ENCODE measurements at regions of chr10 and their contacts with region 1.

Region 1: DNA sequence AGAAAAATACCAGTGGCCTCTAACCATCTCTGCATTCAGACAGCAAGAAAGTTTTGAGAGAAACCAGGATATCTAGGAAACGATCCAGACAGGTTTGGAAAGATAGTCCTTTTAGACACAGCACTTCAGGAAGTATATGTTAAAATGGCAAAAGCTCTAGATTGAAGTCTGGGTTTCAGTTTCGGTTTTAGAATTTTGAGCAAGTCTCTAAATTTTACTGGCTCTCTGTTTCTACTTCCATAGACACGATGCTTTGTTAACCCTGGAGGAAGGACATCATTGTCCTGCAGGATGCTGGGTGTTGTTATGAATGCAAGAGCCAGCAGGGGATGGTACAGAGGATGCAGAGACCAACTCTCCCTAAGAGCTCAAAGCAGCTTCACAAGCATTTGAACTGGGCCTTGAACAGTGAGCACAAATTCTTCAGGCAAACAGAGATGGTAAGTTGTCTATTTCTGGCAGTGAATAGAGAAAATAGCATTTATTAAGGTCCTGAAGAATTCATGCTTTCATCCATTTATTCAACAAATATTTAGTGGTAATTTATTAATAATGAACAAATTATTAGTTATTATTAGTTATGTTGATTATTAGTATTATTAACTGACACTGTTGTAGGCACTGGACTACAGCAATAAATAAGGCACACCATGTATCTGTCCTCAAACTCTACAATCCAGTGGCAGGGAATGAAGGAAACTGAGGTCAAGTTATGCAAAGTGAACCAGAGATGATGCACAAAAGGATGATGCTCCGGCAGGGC is 152.7 kb upstream of the NRP1 start:
- DNase-seq: no peak
- ATAC-seq: peak in 1 of 8 donors; percentile 49
- H3K4me3 ChIP-seq: no peak overlapping the region
- H3K27ac ChIP-seq: no peak overlapping the region
- H3K4me1 ChIP-seq: peaks cover 0 to 50% (median 7%) of the 10 kb centered on the region in 9 donors
- H3K27me3 ChIP-seq: no peaks in the 10 kb centered on the region
- CTCF ChIP-seq: peak in 1 of 9 donors; percentile 21

Region 2: DNA sequence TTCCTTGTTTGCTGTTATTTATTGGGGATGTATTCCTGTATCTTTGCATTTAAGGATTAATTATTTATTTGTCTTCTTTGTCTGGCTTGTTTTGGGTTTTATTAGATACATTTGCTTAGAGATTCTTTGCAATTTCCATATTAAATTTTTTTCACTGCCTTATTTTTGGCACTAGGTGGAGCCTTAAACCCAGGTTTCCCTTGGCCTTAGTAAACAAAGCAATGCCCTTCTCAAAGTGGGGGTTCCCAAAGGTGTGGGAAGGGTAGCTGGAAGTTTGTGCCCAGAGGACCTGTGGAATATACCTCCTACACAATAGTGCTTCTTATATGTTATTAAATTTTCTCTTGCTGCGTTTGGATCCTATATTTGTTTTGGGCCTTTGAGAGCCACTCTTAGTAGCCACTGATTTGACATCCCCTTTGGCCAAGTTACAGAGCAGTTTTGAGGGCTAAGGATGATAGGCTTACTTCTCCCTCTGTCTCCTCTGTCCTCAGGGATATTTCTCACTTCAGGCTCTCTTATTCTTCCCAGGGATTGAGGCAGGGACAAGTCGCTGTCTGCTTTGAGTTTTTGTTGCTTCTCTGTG is 691.5 kb before region 1 on chr10:
- intact Hi-C with region 1: no loop called
- DNase-seq: peak in 1 of 2 donors; percentile 13
- ATAC-seq: peak in 2 of 8 donors; percentile 58 to 67
- H3K4me3 ChIP-seq: no peak overlapping the region
- H3K27ac ChIP-seq: no peak overlapping the region
- H3K4me1 ChIP-seq: no peaks in the 10 kb centered on the region
- H3K27me3 ChIP-seq: no peaks in the 10 kb centered on the region
- CTCF ChIP-seq: peak; percentile 51 to 87 (median 74)

Region 3: DNA sequence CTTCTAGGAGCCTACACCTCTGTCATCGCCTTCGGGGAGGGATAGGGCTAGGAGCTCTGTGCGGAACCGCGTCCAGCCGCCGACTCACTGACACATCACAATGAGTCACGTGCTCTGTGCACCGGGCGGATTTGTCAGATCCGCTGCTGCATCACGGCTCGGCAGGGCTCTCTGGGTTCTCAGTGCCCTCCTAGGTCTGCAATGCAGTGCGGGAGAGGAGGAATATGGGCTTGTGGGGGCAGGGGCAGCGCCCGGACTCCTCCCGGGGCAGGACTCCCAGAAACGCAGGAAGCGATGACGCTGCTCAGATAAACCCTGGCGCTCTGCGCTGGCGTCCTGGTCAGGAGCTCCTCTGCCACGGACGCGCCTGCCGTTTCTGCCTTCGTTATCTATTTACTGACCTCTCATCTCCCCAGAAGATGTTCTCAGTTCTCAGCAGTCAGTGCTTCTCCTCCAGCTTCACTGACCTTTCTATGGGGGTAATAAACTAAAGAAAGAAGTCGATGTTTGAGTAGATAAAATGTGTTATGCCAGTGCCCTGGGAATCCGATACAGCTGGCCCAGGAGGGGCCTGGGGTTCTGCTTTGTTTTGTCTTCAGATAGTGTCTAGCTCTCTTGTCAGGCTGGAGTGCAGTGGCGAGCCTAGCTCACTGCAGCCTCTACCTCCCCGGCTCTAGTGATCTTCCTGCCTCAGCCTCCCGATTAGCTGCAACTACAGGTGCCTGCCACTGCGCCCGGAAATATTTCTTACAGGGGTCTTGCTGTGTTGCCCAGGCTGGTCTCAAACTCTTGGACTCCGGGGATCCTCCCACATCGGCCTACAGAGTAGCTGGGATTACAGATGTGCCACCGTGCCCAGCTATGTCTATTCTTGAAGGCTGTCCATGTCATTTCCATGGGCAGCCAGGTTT is 506.4 kb before region 1 on chr10:
- intact Hi-C with region 1: no loop called
- DNase-seq: peak; percentile 87 to 88
- ATAC-seq: peak; percentile 91 to 99 (median 94)
- H3K4me3 ChIP-seq: peak overlapping the region; percentile 28 to 64 (median 58)
- H3K27ac ChIP-seq: peak overlapping the region; percentile 67 to 98 (median 94)
- H3K4me1 ChIP-seq: peaks cover 0 to 59% (median 32%) of the 10 kb centered on the region in 9 donors
- H3K27me3 ChIP-seq: no peaks in the 10 kb centered on the region
- CTCF ChIP-seq: no peak

Region 4: DNA sequence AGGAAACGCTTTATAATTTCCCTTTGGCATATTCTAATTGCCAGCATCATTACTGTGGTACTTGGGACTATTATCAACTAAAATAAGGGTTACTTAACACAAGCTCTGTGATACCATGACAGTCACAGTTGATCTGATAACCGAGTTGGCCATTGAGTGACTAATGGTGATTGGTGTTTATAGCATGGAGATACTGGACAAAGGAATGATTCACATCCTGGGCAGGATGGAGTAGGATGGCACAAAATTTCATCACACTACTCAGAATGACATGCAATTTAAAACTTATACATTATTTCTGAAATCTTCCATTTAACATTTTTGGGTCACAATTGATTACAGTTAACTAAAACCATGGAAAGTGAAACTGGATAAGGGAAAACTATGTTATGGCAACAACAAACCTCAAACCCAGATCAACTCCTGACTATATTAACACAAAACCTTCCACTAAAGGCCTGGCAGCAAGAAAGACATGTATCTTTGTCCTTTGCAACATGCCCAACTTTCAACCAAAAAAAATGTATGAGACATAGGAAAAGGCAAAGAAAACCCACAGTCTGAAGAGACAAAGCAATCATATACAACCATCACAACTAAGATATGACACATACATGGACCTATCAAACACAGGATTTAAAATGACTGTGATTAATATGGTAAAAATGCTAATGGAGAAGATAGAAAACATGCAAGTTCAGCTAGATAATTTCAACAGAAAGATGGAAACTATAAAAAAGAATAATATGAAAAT is 55.7 kb after region 1 on chr10:
- intact Hi-C with region 1: loop called in 1 of 10 experiments (anchors 2 kb)
- DNase-seq: no peak
- ATAC-seq: no peak
- H3K4me3 ChIP-seq: no peak overlapping the region
- H3K27ac ChIP-seq: no peak overlapping the region
- H3K4me1 ChIP-seq: no peaks in the 10 kb centered on the region
- H3K27me3 ChIP-seq: no peaks in the 10 kb centered on the region
- CTCF ChIP-seq: no peak

Region 5: GRCh38 chr10:33579996-33580395 is 92.8 kb after region 1 on chr10:
- intact Hi-C with region 1: no loop called
- DNase-seq: no peak
- ATAC-seq: no peak
- H3K4me3 ChIP-seq: no peak overlapping the region
- H3K27ac ChIP-seq: no peak overlapping the region
- H3K4me1 ChIP-seq: no peaks in the 10 kb centered on the region
- H3K27me3 ChIP-seq: no peaks in the 10 kb centered on the region
- CTCF ChIP-seq: no peak

Region 6: DNA sequence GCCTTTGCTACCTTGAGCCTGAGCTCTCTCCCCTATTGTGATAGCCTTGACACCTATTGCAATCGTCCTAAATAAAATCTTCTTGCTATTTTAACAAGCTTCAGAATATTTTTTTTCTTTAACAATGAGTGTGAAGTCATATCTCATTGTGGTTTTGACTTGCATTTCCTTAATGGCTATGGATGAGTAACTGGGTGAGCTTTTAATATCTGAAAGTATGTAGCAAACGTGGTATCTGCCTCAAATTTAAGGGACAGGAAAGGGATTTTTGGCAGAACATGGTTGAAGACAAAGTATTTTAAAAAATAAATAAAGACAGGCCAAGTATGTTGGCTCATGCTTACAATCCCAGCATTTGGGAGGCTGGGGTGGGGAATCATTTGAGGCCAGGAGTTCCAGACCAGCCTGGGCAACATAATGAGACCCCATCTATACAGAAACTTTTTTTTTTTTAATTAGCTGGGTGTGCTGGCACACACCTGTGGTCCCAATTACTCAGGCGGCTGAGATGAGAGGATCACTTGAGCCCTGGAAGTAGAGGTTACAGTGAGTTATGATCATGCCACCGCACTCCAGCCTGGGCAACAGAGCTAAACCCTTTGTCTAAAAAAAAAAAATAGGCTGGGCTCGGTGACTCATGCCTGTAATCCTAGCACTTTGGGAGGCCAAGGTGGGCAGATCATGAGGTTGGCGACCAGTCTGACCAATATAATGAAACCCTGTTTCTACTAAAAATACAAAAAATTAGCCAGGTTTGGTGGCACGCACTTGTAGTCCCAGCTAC is 166.6 kb after region 1 on chr10:
- intact Hi-C with region 1: loop called in 1 of 10 experiments (anchors 5 kb)
- DNase-seq: no peak
- ATAC-seq: no peak
- H3K4me3 ChIP-seq: no peak overlapping the region
- H3K27ac ChIP-seq: no peak overlapping the region
- H3K4me1 ChIP-seq: peaks cover 0 to 28% (median 0%) of the 10 kb centered on the region in 9 donors
- H3K27me3 ChIP-seq: no peaks in the 10 kb centered on the region
- CTCF ChIP-seq: no peak